ENCODE measurements at regions of chr20 and their contacts with region 1.

Region 1: GRCh38 chr20:49610701-49611538 is 43.0 kb upstream of the PTGIS start:
- DNase-seq: peak; percentile 98 to 100
- H3K4me3 ChIP-seq: peak overlapping the region; percentile 34
- H3K4me3 Mint-ChIP-seq: peak overlapping the region; percentile 76
- H3K27ac Mint-ChIP-seq: peak overlapping the region; percentile 5
- H3K4me1 ChIP-seq: peaks cover 7% of the 10 kb centered on the region
- H3K4me1 Mint-ChIP-seq: peaks cover 19% of the 10 kb centered on the region
- H3K27me3 ChIP-seq: no peaks in the 10 kb centered on the region
- H3K27me3 Mint-ChIP-seq: no peaks in the 10 kb centered on the region
- CTCF ChIP-seq: peak; percentile 100

Region 2: DNA sequence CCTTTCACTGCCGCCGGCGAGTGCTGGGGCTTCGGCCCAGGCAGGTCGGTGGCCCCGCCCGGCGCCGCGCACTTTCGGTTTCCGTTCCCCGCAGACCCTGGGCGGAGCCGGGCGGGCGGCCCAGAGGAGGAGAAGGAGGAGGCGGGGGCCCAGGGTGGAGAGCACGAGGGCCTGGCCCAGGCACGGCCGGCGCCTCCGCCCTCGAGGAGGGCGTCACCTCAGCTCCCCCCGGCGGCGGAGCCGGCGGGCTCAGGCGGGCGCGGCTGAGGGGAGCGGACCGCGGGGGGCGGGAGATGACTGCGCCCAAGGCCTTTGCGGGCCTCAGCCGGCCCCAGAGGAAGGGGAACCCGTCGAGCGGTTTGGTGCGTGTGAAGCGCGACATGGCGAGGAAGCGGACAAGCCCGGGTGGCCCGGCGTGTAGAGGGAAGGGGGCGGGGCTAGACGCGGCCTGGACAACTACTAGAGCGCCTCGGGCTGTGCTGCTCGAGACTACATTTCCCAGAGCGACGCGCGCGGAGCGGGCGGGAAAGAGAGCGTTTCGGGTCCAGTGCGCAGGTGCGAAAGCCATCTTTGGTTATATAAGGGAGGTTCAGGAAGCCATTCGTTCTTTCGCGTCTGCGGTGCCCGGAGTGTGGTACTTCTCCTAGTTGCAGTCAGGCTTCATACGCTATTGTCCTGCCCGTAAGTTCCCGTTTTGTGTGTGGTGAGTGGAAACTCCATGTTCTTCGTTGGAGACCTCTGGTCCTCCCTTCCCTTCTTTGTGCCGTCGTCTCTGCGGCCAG is 332.7 kb before region 1 on chr20 and contains the start of gene ZNFX1:
- CTCF ChIA-PET with region 1: interaction called, 12 read pairs
- POLR2A ChIA-PET with region 1: no interaction called
- intact Hi-C with region 1: no loop called
- DNase-seq: peak; percentile 100
- H3K4me3 ChIP-seq: peak within 1 kb of the TSS; percentile 76
- H3K4me3 Mint-ChIP-seq: peak within 1 kb of the TSS; percentile 81
- H3K27ac Mint-ChIP-seq: peak within 1 kb of the TSS; percentile 97
- H3K4me1 ChIP-seq: peaks cover 44% of the 10 kb centered on the region
- H3K4me1 Mint-ChIP-seq: peaks cover 56% of the 10 kb centered on the region
- H3K27me3 ChIP-seq: no peaks in the 10 kb centered on the region
- H3K27me3 Mint-ChIP-seq: peaks cover 9% of the 10 kb centered on the region
- CTCF ChIP-seq: no peak
- total RNA-seq, gene ZNFX1: 34.0 and 34.7 TPM in 2 replicates

Region 3: DNA sequence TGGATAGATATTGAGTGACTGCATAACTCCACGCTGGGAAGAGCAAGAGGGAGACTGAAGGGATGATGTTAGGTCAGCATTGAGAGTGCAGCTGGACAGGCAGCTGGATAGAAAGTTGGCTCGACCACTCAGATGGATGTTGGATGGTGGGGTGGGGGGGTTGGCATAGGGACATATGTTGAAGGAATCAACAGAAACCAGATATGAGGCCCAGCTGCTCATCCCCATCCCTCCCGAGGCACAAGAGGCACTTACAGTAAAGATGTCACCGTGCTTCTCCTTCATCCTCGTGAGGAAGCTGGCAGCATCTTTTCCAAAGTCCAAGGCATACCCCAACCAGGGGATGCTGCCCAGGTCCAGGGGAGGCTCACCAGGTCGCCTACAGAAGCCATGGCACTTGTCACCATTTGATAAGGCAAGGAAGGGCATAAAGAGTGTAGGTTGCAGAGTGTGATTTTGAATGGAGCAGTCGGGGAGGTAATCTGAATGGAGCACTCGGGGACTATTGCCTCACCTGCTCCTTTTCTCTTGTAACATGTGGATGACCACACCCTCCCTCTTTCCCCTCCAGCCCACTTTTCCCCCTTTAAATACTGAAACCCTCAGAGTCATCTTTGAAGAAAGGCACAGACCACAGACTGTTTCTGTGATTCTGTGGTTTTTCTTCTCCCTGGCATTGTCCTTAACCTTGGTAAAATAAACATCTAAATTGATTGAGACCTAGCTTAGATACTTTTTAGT is 60.9 kb before region 1 on chr20:
- CTCF ChIA-PET with region 1: interaction called, 572 read pairs
- POLR2A ChIA-PET with region 1: no interaction called
- intact Hi-C with region 1: no loop called
- DNase-seq: peak in 1 of 2 experiments; percentile 32
- H3K4me3 ChIP-seq: no peak overlapping the region
- H3K4me3 Mint-ChIP-seq: no peak overlapping the region
- H3K27ac Mint-ChIP-seq: no peak overlapping the region
- H3K4me1 ChIP-seq: peaks cover 34% of the 10 kb centered on the region
- H3K4me1 Mint-ChIP-seq: peaks cover 16% of the 10 kb centered on the region
- H3K27me3 ChIP-seq: no peaks in the 10 kb centered on the region
- H3K27me3 Mint-ChIP-seq: no peaks in the 10 kb centered on the region
- CTCF ChIP-seq: no peak

Region 4: GRCh38 chr20:49594143-49594930 is 16.6 kb before region 1 on chr20:
- CTCF ChIA-PET with region 1: interaction called, 19 read pairs
- POLR2A ChIA-PET with region 1: no interaction called
- intact Hi-C with region 1: no loop called
- DNase-seq: peak in 1 of 2 experiments; percentile 55
- H3K4me3 ChIP-seq: no peak overlapping the region
- H3K4me3 Mint-ChIP-seq: no peak overlapping the region
- H3K27ac Mint-ChIP-seq: peak overlapping the region; percentile 16
- H3K4me1 ChIP-seq: peaks cover 28% of the 10 kb centered on the region
- H3K4me1 Mint-ChIP-seq: peaks cover 31% of the 10 kb centered on the region
- H3K27me3 ChIP-seq: no peaks in the 10 kb centered on the region
- H3K27me3 Mint-ChIP-seq: no peaks in the 10 kb centered on the region
- CTCF ChIP-seq: no peak

Region 5: DNA sequence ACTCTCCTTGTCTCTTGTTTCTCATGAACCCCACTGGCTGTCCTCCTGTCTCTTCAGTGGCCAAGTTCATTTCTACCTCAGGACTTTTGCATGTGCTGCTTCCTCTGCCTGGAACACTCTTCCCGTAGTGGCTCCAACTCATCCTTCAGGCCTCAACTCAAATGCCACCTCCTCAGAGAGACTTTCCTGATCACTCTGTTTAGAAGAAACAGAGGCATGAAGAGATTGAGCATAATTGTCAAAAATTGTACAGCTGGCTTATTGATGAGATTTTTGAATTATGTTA is 184.2 kb after region 1 on chr20:
- CTCF ChIA-PET with region 1: interaction called, 4 read pairs
- POLR2A ChIA-PET with region 1: interaction called, 14 read pairs
- intact Hi-C with region 1: no loop called
- DNase-seq: no peak
- H3K4me3 ChIP-seq: no peak overlapping the region
- H3K4me3 Mint-ChIP-seq: no peak overlapping the region
- H3K27ac Mint-ChIP-seq: peak overlapping the region; percentile 17
- H3K4me1 ChIP-seq: peaks cover 49% of the 10 kb centered on the region
- H3K4me1 Mint-ChIP-seq: peaks cover 34% of the 10 kb centered on the region
- H3K27me3 ChIP-seq: no peaks in the 10 kb centered on the region
- H3K27me3 Mint-ChIP-seq: no peaks in the 10 kb centered on the region
- CTCF ChIP-seq: no peak

Region 6: DNA sequence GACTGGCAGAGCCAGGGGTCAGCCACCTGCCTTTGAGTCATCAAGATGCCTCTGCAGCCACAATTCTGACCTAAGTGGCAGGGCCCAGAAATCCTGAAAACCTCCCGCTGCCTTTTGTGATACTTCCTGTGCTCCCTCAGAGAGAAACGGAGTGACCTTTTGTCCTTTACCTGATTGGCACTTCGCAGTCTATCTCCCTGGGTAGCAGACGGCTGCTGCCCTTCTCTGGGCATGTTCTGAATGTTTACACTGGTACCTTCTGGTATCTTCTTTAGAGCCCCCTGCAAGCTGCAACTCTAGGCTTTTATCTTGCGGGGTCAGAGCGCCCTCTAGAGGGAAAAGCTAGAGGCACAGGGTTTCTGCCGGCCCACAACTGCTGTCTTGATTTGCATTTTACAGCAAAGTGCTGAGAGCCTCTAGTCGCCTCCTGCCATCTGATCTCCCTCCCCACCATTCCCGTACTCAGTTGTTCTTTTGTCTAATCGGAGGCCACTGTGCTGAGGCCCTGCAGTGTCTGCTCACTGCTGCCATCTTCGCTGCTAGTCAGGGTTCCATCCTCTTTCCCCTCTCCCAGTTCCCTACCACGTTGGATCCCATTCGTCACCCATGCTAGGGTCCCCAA is 277.5 kb after region 1 on chr20:
- CTCF ChIA-PET with region 1: interaction called, 24 read pairs
- POLR2A ChIA-PET with region 1: interaction called, 3 read pairs
- intact Hi-C with region 1: loop called (anchors 1 kb)
- DNase-seq: peak; percentile 76 to 84
- H3K4me3 ChIP-seq: no peak overlapping the region
- H3K4me3 Mint-ChIP-seq: no peak overlapping the region
- H3K27ac Mint-ChIP-seq: peak overlapping the region; percentile 14
- H3K4me1 ChIP-seq: no peaks in the 10 kb centered on the region
- H3K4me1 Mint-ChIP-seq: peaks cover 15% of the 10 kb centered on the region
- H3K27me3 ChIP-seq: no peaks in the 10 kb centered on the region
- H3K27me3 Mint-ChIP-seq: no peaks in the 10 kb centered on the region
- CTCF ChIP-seq: peak; percentile 98 to 99

Measured in Caco-2 (cell line).